Dorsolateral prefrontal cortex (tissue), 120 donors: ENCODE measurements at regions of chr11 and their contacts with region 1.

Region 1: GRCh38 chr11:95849087-95849825 is 59.0 kb downstream of the CEP57 start:
- DNase-seq: peak in 6 of 10 donors; percentile 13 to 72 (median 46)
- H3K4me3 ChIP-seq: no peak overlapping the region
- H3K27ac ChIP-seq: peak overlapping the region in 39 of 59 donors; percentile 1 to 73 (median 43)
- H3K27me3 ChIP-seq: no peaks in the 10 kb centered on the region
- CTCF ChIP-seq: peak in 54 of 56 donors; percentile 43 to 84 (median 60)

Region 2: DNA sequence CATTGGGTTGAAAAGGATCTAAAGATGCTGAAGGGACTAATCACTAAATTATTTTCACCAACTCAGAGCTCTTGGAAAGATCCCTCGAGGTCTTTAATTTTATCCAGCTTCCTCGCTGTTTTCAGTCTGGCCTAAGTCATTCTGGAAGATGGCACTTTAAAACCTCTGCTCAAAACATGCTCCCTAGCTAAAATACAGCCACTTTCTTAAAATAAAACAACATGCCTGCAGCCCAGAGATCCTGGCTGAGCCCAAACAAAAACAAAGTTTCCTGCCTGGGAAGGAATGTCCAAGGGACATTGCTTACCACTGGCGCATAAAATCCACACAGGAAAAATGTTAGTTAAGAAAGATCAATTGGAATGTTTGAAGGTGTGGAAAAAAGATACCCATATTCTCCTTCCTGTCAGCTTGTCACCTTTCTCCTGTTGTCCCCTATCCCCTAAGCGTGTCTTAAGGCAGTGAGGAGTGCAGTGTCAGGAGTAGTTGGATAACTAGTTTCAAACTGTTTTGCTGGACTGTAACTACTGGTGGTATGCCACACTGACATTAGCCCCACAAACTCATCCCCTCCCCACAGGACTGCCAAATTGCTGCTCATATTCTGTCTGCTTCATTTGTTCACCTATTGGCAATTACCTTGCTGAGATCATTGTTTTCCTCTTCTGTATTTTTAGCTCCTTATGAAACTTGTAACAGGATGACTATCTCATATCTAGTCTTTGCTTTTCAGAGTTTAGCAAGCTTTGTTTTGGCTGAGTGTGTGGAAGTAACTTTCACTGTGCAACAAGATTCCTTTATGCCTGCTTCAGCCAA is 510.0 kb before region 1 on chr11:
- intact Hi-C with region 1: no loop called
- DNase-seq: no peak
- H3K4me3 ChIP-seq: no peak overlapping the region
- H3K27ac ChIP-seq: peak overlapping the region in 50 of 59 donors; percentile 6 to 86 (median 72)
- H3K27me3 ChIP-seq: no peaks in the 10 kb centered on the region
- CTCF ChIP-seq: no peak

Region 3: GRCh38 chr11:96054870-96055705 is 205.8 kb after region 1 on chr11:
- intact Hi-C with region 1: loop called (anchors 10 kb)
- DNase-seq: no peak
- H3K4me3 ChIP-seq: no peak overlapping the region
- H3K27ac ChIP-seq: peak overlapping the region in 2 of 59 donors; percentile 6 to 11
- H3K27me3 ChIP-seq: no peaks in the 10 kb centered on the region
- CTCF ChIP-seq: peak; percentile 58 to 87 (median 75)

Region 4: DNA sequence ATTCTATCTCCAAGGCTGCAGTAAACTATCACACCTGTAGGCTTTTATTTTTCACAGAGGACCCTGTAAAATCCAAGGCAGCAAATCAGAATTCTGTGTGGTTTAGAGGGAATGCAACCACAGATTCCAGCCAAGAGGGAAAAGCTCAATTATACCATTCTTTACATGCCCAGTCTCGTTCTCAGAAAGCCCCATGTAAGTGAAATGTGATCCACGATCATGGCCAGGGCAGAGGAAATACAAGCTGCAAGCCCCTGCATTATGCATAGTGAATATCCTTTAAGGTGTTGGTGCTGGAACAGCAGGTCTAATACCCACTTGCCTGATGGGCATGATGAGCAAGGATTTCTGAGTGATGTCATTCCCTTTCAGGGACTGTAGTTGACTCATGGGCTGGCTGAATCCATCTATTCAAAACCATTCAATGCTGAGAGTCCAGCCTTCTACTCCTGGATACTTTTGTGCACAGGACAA is 273.4 kb after region 1 on chr11:
- intact Hi-C with region 1: no loop called
- DNase-seq: no peak
- H3K4me3 ChIP-seq: no peak overlapping the region
- H3K27ac ChIP-seq: no peak overlapping the region
- H3K27me3 ChIP-seq: no peaks in the 10 kb centered on the region
- CTCF ChIP-seq: no peak

Region 5: GRCh38 chr11:96715208-96715607 is 866.0 kb after region 1 on chr11:
- intact Hi-C with region 1: no loop called
- DNase-seq: no peak
- H3K4me3 ChIP-seq: no peak overlapping the region
- H3K27ac ChIP-seq: no peak overlapping the region
- H3K27me3 ChIP-seq: no peaks in the 10 kb centered on the region
- CTCF ChIP-seq: no peak